H1 (cell line): ENCODE measurements at regions of chr5 and their contacts with region 1.

Region 1: GRCh38 chr5:129804705-129805104 is 56.8 kb downstream of the MINAR2 start:
- DNase-seq: no peak
- H3K4me3 ChIP-seq: no peak overlapping the region
- H3K27ac ChIP-seq: no peak overlapping the region
- H3K4me1 ChIP-seq: no peaks in the 10 kb centered on the region
- H3K27me3 ChIP-seq: no peaks in the 10 kb centered on the region
- CTCF ChIP-seq: no peak
- EP300 ChIP-seq: no peak
- POLR2A ChIP-seq: no peak
- RAD21 ChIP-seq: no peak

Region 2: GRCh38 chr5:129593525-129593924 is 211.2 kb before region 1 on chr5:
- CTCF ChIA-PET with region 1: no interaction called
- POLR2A ChIA-PET with region 1: no interaction called
- DNase-seq: no peak
- H3K4me3 ChIP-seq: no peak overlapping the region
- H3K27ac ChIP-seq: no peak overlapping the region
- H3K4me1 ChIP-seq: no peaks in the 10 kb centered on the region
- H3K27me3 ChIP-seq: no peaks in the 10 kb centered on the region
- CTCF ChIP-seq: no peak
- EP300 ChIP-seq: no peak
- POLR2A ChIP-seq: no peak
- RAD21 ChIP-seq: no peak

Region 3: GRCh38 chr5:129652349-129653069 is 152.2 kb before region 1 on chr5:
- CTCF ChIA-PET with region 1: no interaction called
- POLR2A ChIA-PET with region 1: no interaction called
- DNase-seq: no peak
- H3K4me3 ChIP-seq: no peak overlapping the region
- H3K27ac ChIP-seq: no peak overlapping the region
- H3K4me1 ChIP-seq: peaks cover 0 to 4% (median 1%) of the 10 kb centered on the region in 4 experiments; a peak in 2 of 7 replicates
- H3K27me3 ChIP-seq: no peaks in the 10 kb centered on the region
- CTCF ChIP-seq: no peak
- EP300 ChIP-seq: no peak
- POLR2A ChIP-seq: no peak
- RAD21 ChIP-seq: no peak

Region 4: DNA sequence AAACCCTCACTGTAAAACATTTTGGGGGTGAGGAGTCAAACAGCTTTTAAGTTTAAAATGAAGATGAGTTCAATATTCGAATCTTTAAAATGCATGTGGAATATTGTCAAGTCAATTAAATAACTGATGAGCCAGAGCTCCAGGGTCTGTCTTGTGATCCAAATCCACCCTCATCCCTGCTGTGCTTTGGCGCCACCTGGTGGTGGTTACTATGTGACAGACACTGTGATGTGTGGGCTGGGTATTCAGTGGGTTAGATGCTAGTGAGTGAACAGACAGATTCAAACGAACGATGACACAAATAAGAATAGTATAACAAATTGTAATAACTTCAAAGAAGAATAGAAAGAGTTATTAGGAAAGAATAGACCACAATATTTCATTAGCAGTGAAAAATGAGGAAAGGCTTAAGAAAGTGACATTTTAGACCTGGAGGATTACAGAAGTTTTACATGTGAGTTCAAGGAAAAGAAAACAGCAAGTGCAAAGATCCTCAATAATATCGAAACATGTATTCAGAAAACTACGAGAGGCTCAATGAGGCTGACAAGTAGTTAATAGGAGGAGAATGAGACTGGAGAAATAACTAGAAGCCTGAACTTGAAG is 48.1 kb after region 1 on chr5:
- CTCF ChIA-PET with region 1: interaction called, 23 read pairs
- POLR2A ChIA-PET with region 1: no interaction called
- DNase-seq: peak; percentile 41 to 94
- H3K4me3 ChIP-seq: no peak overlapping the region
- H3K27ac ChIP-seq: no peak overlapping the region
- H3K4me1 ChIP-seq: no peaks in the 10 kb centered on the region
- H3K27me3 ChIP-seq: no peaks in the 10 kb centered on the region
- CTCF ChIP-seq: peak; percentile 88 to 91 (median 89)
- EP300 ChIP-seq: no peak
- POLR2A ChIP-seq: no peak
- RAD21 ChIP-seq: peak; percentile 93 to 96